ENCODE measurements at regions of chr7 and their contacts with region 1.

Region 1: DNA sequence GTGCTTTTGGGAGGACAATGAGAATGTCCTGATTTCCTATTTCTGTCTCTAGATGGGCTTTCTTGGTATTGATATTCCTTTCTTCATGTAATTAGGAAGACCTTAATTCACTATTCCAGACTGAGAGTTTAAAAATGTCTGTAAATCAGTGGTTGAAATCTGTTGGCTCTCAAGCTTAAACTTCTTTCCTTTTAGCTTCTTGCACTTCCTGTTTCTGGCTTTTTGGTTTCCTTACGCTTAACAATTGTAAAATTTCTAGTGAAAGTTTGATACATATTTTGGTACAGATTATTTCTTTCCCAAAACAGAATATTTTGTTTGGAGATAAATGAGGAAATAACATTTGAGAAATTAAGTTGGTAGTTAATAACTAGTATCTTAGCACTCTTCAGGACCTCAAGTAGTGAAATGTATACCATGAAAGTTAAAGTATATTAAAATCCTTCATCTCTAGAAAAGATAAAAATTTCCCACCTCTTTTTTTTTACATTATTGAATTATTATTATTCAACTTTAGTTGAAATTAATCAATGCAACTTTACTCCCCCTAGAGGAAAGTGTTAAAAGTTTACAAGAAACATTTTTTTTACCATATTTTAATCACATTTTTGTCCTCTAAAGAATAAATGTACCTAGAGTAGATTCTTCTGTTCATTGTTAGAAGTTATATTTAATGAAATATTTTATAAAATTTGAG is 137.2 kb downstream of the PHTF2 start:
- DNase-seq: no peak
- ATAC-seq: no peak

Region 2: GRCh38 chr7:77338883-77339629 is 596.7 kb before region 1 on chr7:
- intact Hi-C with region 1: no loop called
- DNase-seq: no peak
- ATAC-seq: peak; percentile 15 to 41

Region 3: GRCh38 chr7:77657427-77658224 is 278.2 kb before region 1 on chr7:
- intact Hi-C with region 1: loop called in 1 of 2 experiments (anchors 10 kb)
- DNase-seq: no peak
- ATAC-seq: peak in 1 of 2 donors; percentile 35

Region 4: DNA sequence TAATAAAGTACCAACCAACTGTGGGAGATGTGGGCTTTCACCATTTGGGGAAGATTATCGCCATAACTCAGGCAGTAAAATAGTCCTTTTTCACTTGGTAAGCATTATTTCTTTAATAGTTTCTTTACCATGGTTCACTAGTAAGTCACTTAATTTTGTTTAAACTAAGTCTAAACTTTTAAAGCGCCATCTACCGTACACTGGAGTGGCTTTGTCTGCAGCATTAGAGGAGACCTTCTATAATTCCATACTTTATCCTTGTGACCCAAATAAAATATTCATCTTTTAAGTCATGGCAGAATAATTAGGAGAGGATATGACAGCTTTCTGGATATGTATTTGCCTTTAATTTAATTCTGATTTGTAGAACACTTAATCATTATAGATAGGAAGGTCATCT is 1049.7 kb after region 1 on chr7:
- intact Hi-C with region 1: no loop called
- DNase-seq: no peak
- ATAC-seq: no peak

Measured in left cardiac atrium (tissue), 4 donors.